ENCODE measurements at regions of chr16 and their contacts with region 1.

Region 1: GRCh38 chr16:6643080-6643686 is 689.5 kb upstream of the RBFOX1 start:
- DNase-seq: peak in 1 of 2 experiments; percentile 83
- H3K4me3 ChIP-seq: peak overlapping the region in 1 of 4 experiments; percentile 50; a peak in 2 of 8 replicates
- H3K27ac ChIP-seq: no peak overlapping the region
- H3K4me1 ChIP-seq: peaks cover 0 to 6% (median 5%) of the 10 kb centered on the region in 4 experiments; a peak in 4 of 7 replicates
- H3K27me3 ChIP-seq: no peaks in the 10 kb centered on the region
- CTCF ChIP-seq: peak in 2 of 3 experiments; percentile 63 to 74; a peak in 3 of 4 replicates
- EP300 ChIP-seq: no peak
- POLR2A ChIP-seq: no peak
- RAD21 ChIP-seq: peak; percentile 92 to 93

Region 2: GRCh38 chr16:6016530-6017184 is 626.5 kb before region 1 on chr16:
- CTCF ChIA-PET with region 1: interaction called, 13 read pairs
- POLR2A ChIA-PET with region 1: no interaction called
- DNase-seq: no peak
- H3K4me3 ChIP-seq: no peak overlapping the region
- H3K27ac ChIP-seq: no peak overlapping the region
- H3K4me1 ChIP-seq: peaks cover 0 to 4% (median under 1%) of the 10 kb centered on the region in 4 experiments; a peak in 3 of 7 replicates
- H3K27me3 ChIP-seq: peaks cover 20 to 40% (median 36%) of the 10 kb centered on the region in 4 experiments
- CTCF ChIP-seq: peak in 2 of 3 experiments; percentile 69 to 74; a peak in 3 of 4 replicates
- EP300 ChIP-seq: no peak
- POLR2A ChIP-seq: no peak
- RAD21 ChIP-seq: peak; percentile 77 to 85

Region 3: GRCh38 chr16:6146874-6147425 is 496.2 kb before region 1 on chr16:
- CTCF ChIA-PET with region 1: interaction called, 11 read pairs
- POLR2A ChIA-PET with region 1: no interaction called
- DNase-seq: peak; percentile 31 to 75
- H3K4me3 ChIP-seq: no peak overlapping the region
- H3K27ac ChIP-seq: no peak overlapping the region
- H3K4me1 ChIP-seq: peaks cover 0 to 8% (median 2%) of the 10 kb centered on the region in 4 experiments; a peak in 2 of 7 replicates
- H3K27me3 ChIP-seq: no peaks in the 10 kb centered on the region
- CTCF ChIP-seq: peak; percentile 36 to 97 (median 81)
- EP300 ChIP-seq: no peak
- POLR2A ChIP-seq: no peak
- RAD21 ChIP-seq: peak; percentile 96 to 98

Region 4: GRCh38 chr16:6165330-6165979 is 477.7 kb before region 1 on chr16:
- CTCF ChIA-PET with region 1: interaction called, 14 read pairs
- POLR2A ChIA-PET with region 1: no interaction called
- DNase-seq: no peak
- H3K4me3 ChIP-seq: no peak overlapping the region
- H3K27ac ChIP-seq: no peak overlapping the region
- H3K4me1 ChIP-seq: peaks cover 0 to 8% (median 7%) of the 10 kb centered on the region in 4 experiments; a peak in 5 of 7 replicates
- H3K27me3 ChIP-seq: no peaks in the 10 kb centered on the region
- CTCF ChIP-seq: peak in 1 of 3 experiments; percentile 26; a peak in 2 of 4 replicates
- EP300 ChIP-seq: no peak
- POLR2A ChIP-seq: no peak
- RAD21 ChIP-seq: peak; percentile 28 to 45; a peak in 3 of 4 replicates

Region 5: GRCh38 chr16:6246266-6246665 is 396.9 kb before region 1 on chr16:
- CTCF ChIA-PET with region 1: no interaction called
- POLR2A ChIA-PET with region 1: no interaction called
- DNase-seq: no peak
- H3K4me3 ChIP-seq: no peak overlapping the region
- H3K27ac ChIP-seq: no peak overlapping the region
- H3K4me1 ChIP-seq: peaks cover 0 to 3% (median under 1%) of the 10 kb centered on the region in 4 experiments; a peak in 3 of 7 replicates
- H3K27me3 ChIP-seq: no peaks in the 10 kb centered on the region; a peak in 1 of 7 replicates
- CTCF ChIP-seq: no peak
- EP300 ChIP-seq: no peak
- POLR2A ChIP-seq: no peak
- RAD21 ChIP-seq: no peak

Region 6: GRCh38 chr16:6611535-6611934 is 31.6 kb before region 1 on chr16:
- CTCF ChIA-PET with region 1: interaction called, 11 read pairs
- POLR2A ChIA-PET with region 1: no interaction called
- DNase-seq: peak; percentile 7 to 61
- H3K4me3 ChIP-seq: no peak overlapping the region
- H3K27ac ChIP-seq: no peak overlapping the region
- H3K4me1 ChIP-seq: peaks cover 0 to 5% (median 0%) of the 10 kb centered on the region in 4 experiments; a peak in 2 of 7 replicates
- H3K27me3 ChIP-seq: no peaks in the 10 kb centered on the region
- CTCF ChIP-seq: peak; percentile 8 to 70 (median 54)
- EP300 ChIP-seq: no peak
- POLR2A ChIP-seq: no peak
- RAD21 ChIP-seq: peak; percentile 46 to 57

Region 7: DNA sequence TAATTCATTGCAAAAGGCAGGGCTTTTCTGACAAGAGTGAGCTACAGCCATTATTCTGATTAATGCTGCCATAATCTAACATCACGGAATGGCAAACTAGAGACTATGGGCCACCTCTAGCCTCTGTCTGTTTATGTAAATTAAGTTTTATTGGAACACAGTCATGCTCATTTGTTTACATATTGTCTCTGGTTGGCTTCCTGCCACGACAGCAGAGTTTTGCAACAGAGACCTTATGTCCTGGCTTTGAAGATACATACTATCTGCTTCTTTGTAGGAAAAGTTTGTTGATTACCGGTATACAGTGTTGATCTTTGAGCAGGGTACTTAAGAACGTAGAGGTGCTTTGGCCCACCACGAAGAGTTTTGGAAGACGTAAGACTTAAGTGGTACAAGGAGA is 26.4 kb before region 1 on chr16:
- CTCF ChIA-PET with region 1: interaction called, 11 read pairs
- POLR2A ChIA-PET with region 1: interaction called, 3 read pairs
- DNase-seq: no peak
- H3K4me3 ChIP-seq: no peak overlapping the region
- H3K27ac ChIP-seq: no peak overlapping the region
- H3K4me1 ChIP-seq: peaks cover 0 to 5% (median 0%) of the 10 kb centered on the region in 4 experiments; a peak in 2 of 7 replicates
- H3K27me3 ChIP-seq: no peaks in the 10 kb centered on the region
- CTCF ChIP-seq: no peak
- EP300 ChIP-seq: no peak
- POLR2A ChIP-seq: no peak
- RAD21 ChIP-seq: no peak

Region 8: GRCh38 chr16:6625606-6626005 is 17.6 kb before region 1 on chr16:
- CTCF ChIA-PET with region 1: interaction called, 30 read pairs
- POLR2A ChIA-PET with region 1: interaction called, 3 read pairs
- DNase-seq: no peak
- H3K4me3 ChIP-seq: no peak overlapping the region
- H3K27ac ChIP-seq: no peak overlapping the region
- H3K4me1 ChIP-seq: no peaks in the 10 kb centered on the region; a peak in 1 of 7 replicates
- H3K27me3 ChIP-seq: no peaks in the 10 kb centered on the region
- CTCF ChIP-seq: no peak
- EP300 ChIP-seq: no peak
- POLR2A ChIP-seq: no peak
- RAD21 ChIP-seq: no peak

Measured in H1 (cell line).